ENCODE measurements at regions of chr12 and their contacts with region 1.

Region 1: DNA sequence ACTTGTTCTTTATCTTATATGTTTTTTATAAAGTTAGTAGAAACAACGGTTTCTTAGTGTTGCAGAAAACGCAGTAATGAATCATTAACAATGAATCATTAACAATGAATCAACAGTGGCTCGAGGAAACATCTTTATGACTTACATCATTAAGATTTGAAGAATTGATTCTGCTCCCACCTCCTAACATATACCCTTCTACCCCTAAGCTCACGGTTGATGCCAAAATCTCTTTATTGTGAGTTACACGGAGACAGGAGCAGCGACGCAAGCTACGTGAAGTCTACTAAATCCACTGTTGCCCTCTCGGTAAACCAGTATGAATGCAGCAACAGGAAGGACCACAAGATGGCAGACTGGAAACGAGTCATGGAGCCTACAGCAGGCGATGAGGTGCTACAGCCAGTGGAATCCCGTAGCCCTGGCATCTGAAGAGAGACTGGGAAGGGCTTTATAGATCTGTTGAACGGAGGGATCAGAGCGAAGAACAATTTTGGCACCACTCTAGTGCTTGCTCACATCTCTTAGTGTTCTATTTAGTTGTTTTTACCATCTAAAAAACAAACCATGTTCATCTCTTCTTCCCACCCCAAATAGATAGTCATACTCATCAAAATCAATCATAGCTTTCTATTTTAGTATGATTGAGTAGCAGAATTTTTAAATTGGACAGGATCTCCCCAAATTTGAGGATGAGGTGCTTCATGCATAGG is 332.7 kb downstream of the DUSP6 start:
- DNase-seq: peak; percentile 64
- H3K4me3 ChIP-seq: no peak overlapping the region
- H3K27ac ChIP-seq: no peak overlapping the region
- H3K4me1 ChIP-seq: no peaks in the 10 kb centered on the region
- CTCF ChIP-seq: peak; percentile 84

Region 2: DNA sequence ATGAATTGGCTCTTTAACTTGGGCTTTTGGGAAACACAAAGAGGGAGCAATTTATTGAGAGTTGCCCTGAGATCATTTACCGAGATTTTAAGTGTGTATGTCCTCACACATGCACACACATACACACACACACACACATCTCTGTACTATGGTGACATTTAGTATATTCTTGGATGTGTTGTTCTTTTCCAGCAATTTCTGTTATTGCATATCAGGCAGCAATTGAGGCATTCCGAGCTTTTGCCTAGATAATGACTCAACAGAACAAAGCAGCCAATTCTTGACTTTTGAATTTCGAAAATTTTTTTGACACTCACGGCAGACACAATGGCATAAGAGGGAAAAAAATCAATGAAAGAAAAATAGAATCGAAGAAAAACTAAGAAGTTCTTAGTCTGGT is 84.3 kb after region 1 on chr12:
- CTCF ChIA-PET with region 1: no interaction called
- POLR2A ChIA-PET with region 1: no interaction called
- intact Hi-C with region 1: no loop called
- DNase-seq: no peak
- H3K4me3 ChIP-seq: no peak overlapping the region
- H3K27ac ChIP-seq: no peak overlapping the region
- H3K4me1 ChIP-seq: no peaks in the 10 kb centered on the region
- CTCF ChIP-seq: no peak

Region 3: DNA sequence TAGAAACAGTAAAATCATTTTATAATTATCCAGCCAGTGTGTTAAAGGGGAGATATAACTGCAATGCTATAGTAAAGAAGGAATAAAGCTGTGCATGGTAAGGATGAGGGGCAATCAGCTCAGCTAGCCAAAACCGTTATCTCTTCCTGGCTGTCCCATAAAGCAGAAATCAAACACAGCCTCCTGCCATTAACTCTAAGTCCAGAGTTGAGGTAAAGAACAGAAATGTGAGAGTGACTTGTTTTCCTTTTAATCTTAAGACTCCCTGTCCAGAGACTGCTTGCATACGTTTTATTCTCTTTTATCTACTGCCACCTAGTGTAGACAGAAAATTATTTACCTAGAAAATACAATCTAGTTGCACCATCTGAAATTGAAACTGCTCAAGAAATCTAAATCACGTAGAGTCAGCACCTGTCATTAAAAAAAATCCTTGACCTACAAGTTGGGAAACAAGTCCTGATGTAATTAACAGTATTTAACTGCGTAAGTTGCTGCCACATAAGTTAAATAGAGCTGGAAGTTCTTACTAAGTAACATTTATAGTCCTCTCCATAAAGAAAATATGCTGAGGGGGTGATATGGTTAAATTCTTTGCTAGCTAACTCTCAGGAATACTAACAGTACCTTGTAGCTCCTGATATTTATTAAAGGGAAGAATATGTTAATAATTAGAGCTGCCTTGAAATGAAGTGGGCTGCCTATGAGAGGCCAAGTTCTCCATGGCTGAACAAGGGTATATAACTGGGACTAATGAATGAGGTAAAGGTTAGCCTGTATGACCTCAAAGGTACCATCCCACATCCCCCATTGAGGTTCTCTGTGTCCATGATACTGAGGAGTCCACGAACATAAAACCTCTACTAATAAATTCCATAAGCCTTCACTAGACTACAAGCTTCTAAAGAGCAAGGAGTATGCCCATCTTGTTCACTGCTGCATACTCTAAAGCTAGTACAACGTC is 442.4 kb after region 1 on chr12:
- CTCF ChIA-PET with region 1: interaction called, 3 read pairs
- POLR2A ChIA-PET with region 1: interaction called, 5 read pairs
- intact Hi-C with region 1: loop called (anchors 1 kb)
- DNase-seq: peak; percentile 67
- H3K4me3 ChIP-seq: no peak overlapping the region
- H3K27ac ChIP-seq: no peak overlapping the region
- H3K4me1 ChIP-seq: no peaks in the 10 kb centered on the region
- CTCF ChIP-seq: peak; percentile 88

Region 4: DNA sequence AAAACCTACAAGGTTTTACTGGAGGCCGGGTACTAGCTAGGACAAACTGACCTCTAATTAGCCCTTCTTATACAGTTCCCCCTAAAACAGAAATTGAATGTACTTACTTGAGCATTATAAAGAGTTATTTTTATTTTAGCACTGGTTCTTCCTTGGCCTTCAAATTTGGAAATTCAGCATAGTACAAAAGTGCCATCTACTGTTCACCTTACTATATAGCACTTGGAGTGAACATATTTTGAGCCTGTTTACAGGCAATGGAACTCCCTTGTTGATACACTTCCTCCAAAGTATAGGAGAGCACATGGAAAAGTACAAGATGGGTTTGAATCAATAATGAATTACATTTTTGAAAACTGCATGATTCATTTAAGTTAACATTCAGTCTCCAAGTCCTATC is 510.2 kb after region 1 on chr12:
- CTCF ChIA-PET with region 1: interaction called, 3 read pairs
- POLR2A ChIA-PET with region 1: interaction called, 9 read pairs
- intact Hi-C with region 1: loop called (anchors 1 kb)
- DNase-seq: peak; percentile 58
- H3K4me3 ChIP-seq: no peak overlapping the region
- H3K27ac ChIP-seq: no peak overlapping the region
- H3K4me1 ChIP-seq: peaks cover 19% of the 10 kb centered on the region
- CTCF ChIP-seq: peak; percentile 92

Region 5: DNA sequence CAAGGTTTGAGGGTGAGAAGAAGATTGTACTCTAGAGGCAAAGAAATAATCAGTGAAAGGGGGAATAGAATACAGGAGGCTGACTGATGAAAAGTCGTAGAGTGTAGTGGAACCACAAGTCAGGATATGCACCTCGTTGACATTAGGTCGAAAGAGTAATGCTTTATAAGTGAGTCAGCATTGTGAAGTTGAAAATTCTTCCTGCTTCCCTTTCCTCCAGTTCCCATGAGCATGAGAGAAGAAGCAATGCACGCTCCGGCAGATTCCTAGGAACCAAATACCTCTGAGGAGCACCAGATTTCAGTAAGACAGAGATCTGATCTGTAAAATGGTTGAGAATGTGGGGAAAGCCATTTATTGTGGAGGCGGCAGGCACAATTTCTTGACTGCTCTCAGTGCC is 1918.9 kb after region 1 on chr12:
- CTCF ChIA-PET with region 1: no interaction called
- POLR2A ChIA-PET with region 1: no interaction called
- intact Hi-C with region 1: loop called (anchors 5 kb)
- DNase-seq: no peak
- H3K4me3 ChIP-seq: no peak overlapping the region
- H3K27ac ChIP-seq: no peak overlapping the region
- H3K4me1 ChIP-seq: no peaks in the 10 kb centered on the region
- CTCF ChIP-seq: no peak

Measured in OCI-LY7 (cell line).